K562 (cell line): ENCODE measurements at regions of chr10 and their contacts with region 1.

Region 1: GRCh38 chr10:46548498-46549090 is 7.9 kb downstream of the GPRIN2 start:
- DNase-seq: no peak
- ATAC-seq: no peak
- H3K4me3 ChIP-seq: no peak overlapping the region
- H3K27ac ChIP-seq: no peak overlapping the region
- H3K4me1 ChIP-seq: peaks cover 7 to 21% of the 10 kb centered on the region in 2 experiments; a peak in 4 of 5 replicates
- H3K27me3 ChIP-seq: peaks cover 41 to 90% of the 10 kb centered on the region in 2 experiments; a peak in 4 of 5 replicates
- CTCF ChIP-seq: no peak
- EP300 ChIP-seq: no peak
- POLR2A ChIP-seq: no peak
- RAD21 ChIP-seq: no peak

Region 2: DNA sequence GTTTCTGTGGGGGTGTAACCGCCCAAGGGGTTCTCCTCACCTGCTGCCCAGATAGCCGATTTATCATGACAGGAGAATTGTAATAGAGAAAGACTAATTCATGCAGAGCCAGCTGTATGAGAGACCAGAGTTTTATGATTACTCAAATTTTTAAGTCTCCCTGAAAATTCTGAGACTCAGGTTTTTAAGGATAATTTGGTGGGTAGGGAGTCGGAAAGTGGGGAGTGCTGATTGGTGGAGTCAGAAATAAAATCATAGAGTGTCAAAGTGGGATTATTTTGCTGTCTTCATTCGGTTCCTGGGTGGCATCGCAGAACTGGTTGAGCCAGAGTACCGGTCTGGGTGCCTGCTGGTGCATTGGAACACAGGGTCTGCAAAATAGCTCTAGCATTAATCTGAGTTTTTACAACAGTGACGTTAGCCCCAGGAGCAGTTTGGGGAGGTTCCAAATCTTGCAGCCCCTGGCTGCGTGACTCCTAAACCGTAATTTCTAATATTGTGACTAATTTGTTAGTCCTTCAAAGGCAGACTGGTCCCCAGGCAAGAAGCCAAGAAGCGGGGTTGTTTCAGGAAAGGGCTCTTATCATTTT is 24.6 kb before region 1 on chr10:
- CTCF ChIA-PET with region 1: no interaction called
- POLR2A ChIA-PET with region 1: interaction called, 5 read pairs
- in situ Hi-C with region 1: no loop called
- intact Hi-C with region 1: loop called (anchors 2 kb)
- DNase-seq: no peak
- ATAC-seq: no peak
- H3K4me3 ChIP-seq: no peak overlapping the region
- H3K27ac ChIP-seq: 0 out of 3 replicates have a peak overlapping the region, but pooled peaks have one; percentile 2
- H3K4me1 ChIP-seq: peaks cover 12 to 15% of the 10 kb centered on the region in 2 experiments; a peak in 4 of 5 replicates
- H3K27me3 ChIP-seq: peaks cover 13 to 46% of the 10 kb centered on the region in 2 experiments; a peak in 4 of 5 replicates
- CTCF ChIP-seq: no peak
- EP300 ChIP-seq: no peak
- POLR2A ChIP-seq: no peak
- RAD21 ChIP-seq: no peak